Colonic mucosa (tissue), 4 donors: ENCODE measurements at regions of chr2 and their contacts with region 1.

Region 1: DNA sequence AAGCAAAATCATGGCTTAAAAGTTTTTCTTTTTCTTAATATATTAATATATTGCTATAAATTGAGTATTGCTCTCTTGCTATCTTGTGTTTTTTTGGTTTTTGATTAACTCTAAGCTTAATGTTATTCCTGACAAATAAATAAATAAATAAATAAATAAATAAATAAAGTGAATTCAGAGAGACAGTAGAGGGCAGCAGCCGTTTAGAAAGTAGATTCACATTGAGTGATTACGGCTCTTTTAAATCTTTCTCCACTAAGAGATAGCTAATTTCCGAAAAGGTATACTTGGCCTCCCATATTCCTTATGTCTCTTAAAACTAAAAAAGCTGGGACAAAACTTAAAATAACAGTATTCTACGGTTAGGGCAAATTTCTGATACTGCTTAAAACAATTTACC is 34.3 kb downstream of the MSH2 start:
- DNase-seq: no peak
- H3K4me3 ChIP-seq: no peak overlapping the region
- H3K27ac ChIP-seq: no peak overlapping the region
- H3K4me1 ChIP-seq: no peaks in the 10 kb centered on the region
- H3K27me3 ChIP-seq: no peaks in the 10 kb centered on the region
- CTCF ChIP-seq: peak; percentile 17

Region 2: GRCh38 chr2:47310801-47311560 is 126.3 kb before region 1 on chr2:
- intact Hi-C with region 1: no loop called
- DNase-seq: peak; percentile 65
- H3K4me3 ChIP-seq: no peak overlapping the region
- H3K27ac ChIP-seq: peak overlapping the region; percentile 74
- H3K4me1 ChIP-seq: peaks cover 6% of the 10 kb centered on the region
- H3K27me3 ChIP-seq: no peaks in the 10 kb centered on the region
- CTCF ChIP-seq: no peak

Region 3: DNA sequence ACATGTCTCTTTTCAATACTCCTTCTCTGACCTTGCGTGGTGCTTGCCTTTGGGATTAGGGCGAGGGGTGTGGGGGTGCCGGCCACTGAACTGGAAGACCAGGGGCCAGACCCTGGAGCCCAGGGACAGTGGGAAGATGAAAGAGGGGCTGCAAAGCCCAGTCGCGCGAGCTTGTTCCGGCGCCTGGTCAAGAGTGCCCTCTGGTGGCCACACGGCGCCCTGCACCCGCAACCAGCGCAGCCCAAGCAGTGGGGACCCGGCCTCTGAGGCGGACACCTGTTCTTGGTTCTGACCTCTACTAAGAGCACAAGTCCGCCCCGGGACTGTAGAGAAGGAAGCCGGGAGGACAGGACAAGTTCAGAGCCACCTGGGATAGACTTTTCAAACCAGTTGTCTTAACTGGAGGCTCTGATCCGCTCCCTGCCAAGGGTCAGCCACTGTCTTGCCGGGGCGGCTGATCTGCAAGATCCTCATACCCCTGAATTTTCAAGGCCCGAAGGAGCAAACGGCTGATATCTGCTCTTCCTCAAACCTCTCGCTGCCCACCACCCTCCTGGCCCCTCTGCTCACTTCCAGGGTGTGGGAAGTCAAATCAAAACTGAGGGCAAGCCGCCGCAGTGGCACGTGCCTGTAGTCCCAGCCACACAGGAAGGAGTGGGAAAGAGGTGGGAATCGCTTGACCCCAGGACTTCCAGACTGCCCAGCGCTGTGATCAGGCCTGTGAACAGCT is 330.8 kb after region 1 on chr2:
- intact Hi-C with region 1: loop called (anchors 2 kb)
- DNase-seq: peak; percentile 54
- H3K4me3 ChIP-seq: no peak overlapping the region
- H3K27ac ChIP-seq: no peak overlapping the region
- H3K4me1 ChIP-seq: no peaks in the 10 kb centered on the region
- H3K27me3 ChIP-seq: no peaks in the 10 kb centered on the region
- CTCF ChIP-seq: peak; percentile 99